Adrenal gland (tissue), 19 donors: ENCODE measurements at regions of chr9 and their contacts with region 1.

Region 1: GRCh38 chr9:127734747-127735529 is at the start of gene TOR2A:
- DNase-seq: peak; percentile 97 to 99 (median 98)
- H3K4me3 ChIP-seq: peak within 1 kb of the TSS; percentile 18 to 82 (median 54)
- H3K27ac ChIP-seq: peak within 1 kb of the TSS; percentile 71 to 95 (median 89)
- H3K4me1 ChIP-seq: peaks cover 6 to 13% of the 10 kb centered on the region in 2 donors
- H3K27me3 ChIP-seq: no peaks in the 10 kb centered on the region
- CTCF ChIP-seq: peak; percentile 92 to 99 (median 98)
- POLR2A ChIP-seq: peak; percentile 88 to 94
- total RNA-seq, gene TOR2A: 10.8 to 30.6 (median 17.9) TPM

Region 2: DNA sequence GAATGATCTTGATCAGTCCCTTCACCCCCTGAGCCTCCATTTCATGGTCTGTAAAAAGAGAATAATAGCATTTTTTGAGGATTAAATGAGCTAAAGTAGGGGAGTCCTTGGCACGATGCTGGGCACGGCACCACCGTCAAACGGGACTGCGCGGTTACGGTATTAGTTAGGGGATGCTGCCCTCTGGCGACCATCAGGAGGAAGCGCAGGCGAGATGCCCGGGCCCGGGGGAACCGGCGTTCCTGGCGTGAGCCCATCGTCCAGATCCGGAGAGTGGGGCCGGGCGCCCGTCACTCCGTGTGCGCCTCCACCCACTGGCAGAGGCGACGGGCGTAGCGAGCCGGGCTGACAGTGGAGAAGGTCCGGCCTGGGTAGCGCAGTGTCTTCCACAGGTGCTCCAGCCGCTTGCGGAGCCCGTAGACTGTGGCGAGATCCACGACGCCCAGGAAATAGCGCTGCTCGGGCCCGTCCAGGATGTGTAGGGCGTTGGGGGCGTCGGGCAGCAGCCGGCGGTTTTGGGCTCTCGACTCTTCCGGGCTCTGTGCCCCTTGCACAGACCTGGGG is 186.7 kb after region 1 on chr9:
- intact Hi-C with region 1: loop called in 1 of 2 experiments (anchors 5 kb)
- DNase-seq: peak; percentile 61 to 87 (median 76)
- H3K4me3 ChIP-seq: no peak overlapping the region
- H3K27ac ChIP-seq: no peak overlapping the region
- H3K4me1 ChIP-seq: peaks cover 13 to 37% of the 10 kb centered on the region in 2 donors
- H3K27me3 ChIP-seq: peaks cover 13% of the 10 kb centered on the region
- CTCF ChIP-seq: peak; percentile 92 to 97 (median 95)
- POLR2A ChIP-seq: no peak

Region 3: DNA sequence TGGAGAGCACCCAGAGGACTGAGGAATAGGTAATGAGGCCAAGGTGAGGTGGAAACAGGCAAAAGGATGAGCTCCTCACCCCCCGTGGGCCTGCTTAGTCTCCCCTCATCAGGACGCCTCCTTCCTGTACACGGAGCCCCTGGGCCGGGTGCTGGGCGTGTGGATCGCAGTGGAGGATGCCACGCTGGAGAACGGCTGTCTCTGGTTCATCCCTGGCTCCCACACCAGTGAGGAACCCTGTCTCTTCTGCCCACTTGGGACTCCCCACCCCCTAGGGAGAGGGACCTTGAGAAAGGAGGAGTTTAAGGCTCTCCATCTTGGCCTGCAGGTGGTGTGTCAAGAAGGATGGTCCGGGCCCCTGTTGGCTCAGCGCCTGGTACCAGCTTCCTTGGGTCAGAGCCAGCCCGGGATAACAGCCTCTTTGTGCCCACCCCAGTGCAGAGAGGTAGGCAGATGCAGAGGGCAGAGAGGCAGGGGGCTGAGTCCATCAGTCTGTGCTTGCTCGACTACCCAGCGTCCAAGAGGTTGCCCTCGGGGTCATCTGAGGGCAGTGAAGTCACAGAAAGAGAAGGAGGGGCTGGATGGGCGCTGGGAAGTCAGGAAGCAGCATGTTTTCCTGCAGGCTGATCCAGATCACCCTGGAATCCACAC is 1205.5 kb after region 1 on chr9:
- intact Hi-C with region 1: no loop called
- DNase-seq: peak in 3 of 7 donors; percentile 23 to 57 (median 45)
- H3K4me3 ChIP-seq: no peak overlapping the region
- H3K27ac ChIP-seq: peak overlapping the region in 1 of 5 donors; percentile 27
- H3K4me1 ChIP-seq: peaks cover 8 to 28% of the 10 kb centered on the region in 2 donors
- H3K27me3 ChIP-seq: no peaks in the 10 kb centered on the region
- CTCF ChIP-seq: no peak
- POLR2A ChIP-seq: no peak